WTC11 (cell line): ENCODE measurements at regions of chr19 and their contacts with region 1.

Region 1: GRCh38 chr19:4791170-4792018 is at the start of gene FEM1A:
- DNase-seq: peak; percentile 98
- ATAC-seq: peak; percentile 98
- H3K4me3 Mint-ChIP-seq: peak within 1 kb of the TSS; percentile 80
- H3K27ac Mint-ChIP-seq: no peak within 1 kb of the TSS; the same call in 1 of the 2 replicates
- H3K4me1 Mint-ChIP-seq: peaks cover 14% of the 10 kb centered on the region
- H3K27me3 Mint-ChIP-seq: no peaks in the 10 kb centered on the region
- CTCF ChIP-seq: peak; percentile 95
- total RNA-seq, gene FEM1A: 15.7 to 16.1 TPM (median 15.8 TPM) in 3 replicates

Region 2: DNA sequence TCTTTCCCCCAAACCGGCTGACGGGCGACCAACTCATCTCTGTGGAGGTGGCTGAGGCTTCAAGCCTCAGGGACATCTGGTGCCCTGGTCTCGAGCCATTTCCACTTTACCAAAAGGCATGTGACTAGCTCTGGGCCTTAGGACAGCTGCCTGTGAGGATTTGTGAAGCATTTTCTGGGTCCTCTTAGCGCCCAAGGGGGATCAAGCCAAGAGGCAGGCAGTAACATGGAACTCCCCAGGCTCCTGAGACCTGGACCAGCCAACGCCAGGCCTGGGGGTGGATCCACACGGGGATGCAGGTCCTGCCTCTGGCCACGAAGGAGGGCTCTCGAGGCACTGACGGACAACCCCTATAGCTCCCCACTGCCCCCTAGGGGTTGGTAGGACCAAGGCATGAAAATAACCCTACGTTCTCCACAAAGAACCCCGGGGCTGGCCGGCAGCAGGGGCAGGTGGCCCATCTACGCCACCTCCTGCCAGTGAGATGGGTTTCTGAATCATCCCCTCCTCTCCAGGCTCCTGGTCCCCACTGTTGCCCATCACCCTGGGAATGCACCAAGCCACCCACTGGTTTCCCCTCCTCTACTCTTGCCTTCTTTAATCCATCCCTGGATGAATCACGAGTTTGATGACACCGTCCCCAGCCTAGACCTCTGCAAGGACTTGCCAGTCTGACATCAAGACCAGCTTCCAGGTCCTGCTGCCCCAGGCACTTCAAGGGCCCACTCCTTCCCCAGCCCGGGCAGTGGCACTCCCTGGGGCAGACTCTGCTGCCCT is 114.3 kb before region 1 on chr19:
- CTCF ChIA-PET with region 1: interaction called, 10 read pairs
- POLR2A ChIA-PET with region 1: no interaction called
- DNase-seq: peak; percentile 87
- ATAC-seq: peak; percentile 48
- H3K4me3 Mint-ChIP-seq: no peak overlapping the region
- H3K27ac Mint-ChIP-seq: peak overlapping the region; percentile 30; the same call in 1 of the 2 replicates
- H3K4me1 Mint-ChIP-seq: peaks cover 12% of the 10 kb centered on the region
- H3K27me3 Mint-ChIP-seq: no peaks in the 10 kb centered on the region
- CTCF ChIP-seq: peak; percentile 78

Region 3: DNA sequence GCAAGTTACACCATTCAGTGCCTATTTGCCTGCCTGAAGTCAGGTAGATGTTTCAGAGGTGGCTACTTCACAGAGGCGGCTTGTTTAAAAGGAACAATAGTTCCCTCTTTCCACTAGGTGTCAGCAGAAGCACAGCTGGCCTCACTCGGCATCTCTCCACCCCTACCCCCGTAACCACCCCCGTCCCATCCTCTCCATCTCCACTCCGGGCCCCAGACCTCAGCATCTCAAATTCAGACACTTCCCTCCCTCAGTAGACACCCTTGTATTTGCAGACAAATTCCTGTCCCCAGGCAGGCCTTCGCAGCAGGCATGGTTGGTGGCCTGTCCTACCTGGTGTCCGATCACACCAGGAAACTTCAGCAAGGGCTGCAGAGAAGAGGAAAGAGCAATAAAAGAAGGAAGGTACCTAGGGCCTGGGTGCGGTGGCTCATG is 58.7 kb before region 1 on chr19:
- CTCF ChIA-PET with region 1: interaction called, 150 read pairs
- POLR2A ChIA-PET with region 1: interaction called, 3 read pairs
- DNase-seq: peak; percentile 74
- ATAC-seq: peak; percentile 93
- H3K4me3 Mint-ChIP-seq: peak overlapping the region; percentile 57
- H3K27ac Mint-ChIP-seq: no peak overlapping the region; the same call in 1 of the 2 replicates
- H3K4me1 Mint-ChIP-seq: no peaks in the 10 kb centered on the region; the same call in 1 of the 2 replicates
- H3K27me3 Mint-ChIP-seq: peaks cover 2% of the 10 kb centered on the region
- CTCF ChIP-seq: peak; percentile 55; the same call in 1 of the 2 replicates

Region 4: GRCh38 chr19:4744451-4745174 is 46.8 kb before region 1 on chr19:
- CTCF ChIA-PET with region 1: interaction called, 19 read pairs
- POLR2A ChIA-PET with region 1: no interaction called
- DNase-seq: no peak
- ATAC-seq: no peak
- H3K4me3 Mint-ChIP-seq: no peak overlapping the region
- H3K27ac Mint-ChIP-seq: no peak overlapping the region
- H3K4me1 Mint-ChIP-seq: peaks cover 12% of the 10 kb centered on the region
- H3K27me3 Mint-ChIP-seq: peaks cover 3% of the 10 kb centered on the region; the same call in 1 of the 2 replicates
- CTCF ChIP-seq: no peak

Region 5: GRCh38 chr19:4768934-4769777 is 22.2 kb before region 1 on chr19:
- CTCF ChIA-PET with region 1: interaction called, 30 read pairs
- POLR2A ChIA-PET with region 1: interaction called, 6 read pairs
- DNase-seq: peak; percentile 95
- ATAC-seq: peak; percentile 91
- H3K4me3 Mint-ChIP-seq: peak overlapping the region; percentile 40; the same call in 1 of the 2 replicates
- H3K27ac Mint-ChIP-seq: no peak overlapping the region
- H3K4me1 Mint-ChIP-seq: no peaks in the 10 kb centered on the region
- H3K27me3 Mint-ChIP-seq: peaks cover 20% of the 10 kb centered on the region
- CTCF ChIP-seq: no peak

Region 6: GRCh38 chr19:4803736-4804695 is 12.6 kb after region 1 on chr19:
- CTCF ChIA-PET with region 1: interaction called, 39 read pairs
- POLR2A ChIA-PET with region 1: interaction called, 4 read pairs
- DNase-seq: peak; percentile 93
- ATAC-seq: peak; percentile 98
- H3K4me3 Mint-ChIP-seq: no peak overlapping the region
- H3K27ac Mint-ChIP-seq: no peak overlapping the region
- H3K4me1 Mint-ChIP-seq: no peaks in the 10 kb centered on the region
- H3K27me3 Mint-ChIP-seq: no peaks in the 10 kb centered on the region
- CTCF ChIP-seq: peak; percentile 90

Region 7: DNA sequence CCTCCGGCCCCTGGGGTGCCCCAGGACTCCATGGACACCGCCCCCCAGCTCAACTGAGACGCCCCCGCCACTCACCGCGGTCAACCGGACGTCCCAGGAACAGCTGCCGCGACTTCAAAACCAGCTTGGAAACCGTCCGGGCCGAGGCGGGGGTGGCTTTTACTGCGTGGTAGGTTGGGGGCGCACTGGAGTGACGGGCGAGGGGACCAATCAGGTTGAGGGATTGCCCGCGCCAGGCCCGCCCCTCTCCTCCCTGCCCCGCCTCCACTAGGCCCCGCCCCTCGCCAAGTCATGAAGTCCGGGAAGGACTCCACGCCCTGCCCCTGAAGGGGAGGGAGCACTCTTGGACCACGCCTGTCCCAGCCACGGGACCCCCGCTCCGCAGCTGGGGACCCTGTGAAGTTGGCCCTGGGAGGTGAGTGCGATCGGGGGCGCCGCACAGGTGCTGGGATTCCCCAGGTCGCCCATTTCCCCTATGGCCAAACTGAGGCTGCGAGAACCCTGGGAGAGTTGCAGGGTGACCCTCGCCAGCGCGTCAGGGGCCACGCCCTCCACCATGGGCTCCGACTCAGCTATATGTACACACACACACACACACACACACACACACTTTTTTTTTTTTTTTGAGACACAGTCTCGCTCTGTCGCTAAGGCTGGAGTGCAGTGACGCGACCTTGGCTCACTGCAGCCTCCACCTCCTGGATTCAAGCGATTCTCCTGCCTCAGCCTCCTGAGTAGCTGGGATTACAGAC is 76.3 kb after region 1 on chr19 and contains the start of gene PLIN3:
- CTCF ChIA-PET with region 1: interaction called, 10 read pairs
- POLR2A ChIA-PET with region 1: no interaction called
- DNase-seq: peak; percentile 96
- ATAC-seq: peak; percentile 95
- H3K4me3 Mint-ChIP-seq: peak within 1 kb of the TSS; percentile 80
- H3K27ac Mint-ChIP-seq: peak within 1 kb of the TSS; percentile 66
- H3K4me1 Mint-ChIP-seq: peaks cover 8% of the 10 kb centered on the region
- H3K27me3 Mint-ChIP-seq: no peaks in the 10 kb centered on the region; the same call in 1 of the 2 replicates
- CTCF ChIP-seq: no peak
- total RNA-seq, gene PLIN3: 61.3 to 72.1 TPM (median 71.2 TPM) in 3 replicates